ENCODE measurements at regions of chr10 and their contacts with region 1.

Region 1: DNA sequence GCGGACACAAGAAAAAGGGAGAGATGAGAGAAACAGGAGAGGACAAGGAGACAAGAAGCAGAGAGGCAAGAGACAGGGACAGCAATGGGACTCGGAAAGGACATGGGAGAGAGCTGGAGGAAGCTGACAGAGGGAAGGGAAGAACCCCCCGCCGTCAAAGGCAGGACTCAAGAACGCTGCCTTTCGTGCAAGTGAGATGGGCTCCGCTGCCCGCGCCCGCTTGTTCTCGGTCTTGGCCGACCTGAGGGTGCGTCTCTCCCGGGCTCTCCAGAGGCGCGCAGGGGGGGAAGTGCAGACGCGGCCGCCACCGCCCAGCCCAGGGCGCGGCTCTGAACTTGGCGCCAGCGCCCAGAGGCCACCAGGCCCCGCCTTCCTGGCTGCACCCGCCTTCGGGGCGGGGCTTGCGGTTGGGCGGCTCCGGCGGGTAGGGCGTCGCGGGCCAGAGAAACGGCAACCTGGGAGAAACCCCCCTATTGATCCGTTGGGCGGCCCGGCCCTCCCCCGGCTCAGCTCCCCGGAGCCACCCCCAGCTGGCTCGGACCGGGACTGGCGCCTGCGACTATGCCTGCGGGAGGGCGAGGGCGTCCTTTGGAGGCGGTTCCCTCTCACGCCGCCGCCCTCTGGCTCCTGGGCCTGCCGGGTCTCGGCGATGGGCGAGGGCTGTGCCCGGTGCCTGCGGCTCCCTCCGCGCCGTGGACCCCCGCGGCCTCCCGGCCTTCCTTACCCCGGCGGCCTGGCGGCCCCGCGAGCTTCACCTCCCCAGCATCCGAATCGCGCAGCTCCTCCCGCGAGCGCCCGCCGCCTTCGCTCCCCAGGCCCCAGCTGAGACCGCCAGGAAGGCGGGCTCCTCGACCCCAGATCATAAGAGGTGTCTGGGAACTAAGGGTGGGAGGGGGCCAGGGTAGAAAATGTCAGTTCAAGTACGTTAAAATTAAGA is 2.2 kb upstream of the ANTXRL start:
- DNase-seq: peak; percentile 34
- ATAC-seq: peak; percentile 87
- H3K4me3 ChIP-seq: peak overlapping the region; percentile 65
- H3K27ac ChIP-seq: peak overlapping the region; percentile 57; the same call in 1 of the 2 replicates
- H3K4me1 ChIP-seq: peaks cover 2% of the 10 kb centered on the region; the same call in 1 of the 2 replicates
- H3K27me3 ChIP-seq: peaks cover 6% of the 10 kb centered on the region
- CTCF ChIP-seq: no peak
- POLR2A ChIP-seq: no peak
- RAD21 ChIP-seq: no peak

Region 2: DNA sequence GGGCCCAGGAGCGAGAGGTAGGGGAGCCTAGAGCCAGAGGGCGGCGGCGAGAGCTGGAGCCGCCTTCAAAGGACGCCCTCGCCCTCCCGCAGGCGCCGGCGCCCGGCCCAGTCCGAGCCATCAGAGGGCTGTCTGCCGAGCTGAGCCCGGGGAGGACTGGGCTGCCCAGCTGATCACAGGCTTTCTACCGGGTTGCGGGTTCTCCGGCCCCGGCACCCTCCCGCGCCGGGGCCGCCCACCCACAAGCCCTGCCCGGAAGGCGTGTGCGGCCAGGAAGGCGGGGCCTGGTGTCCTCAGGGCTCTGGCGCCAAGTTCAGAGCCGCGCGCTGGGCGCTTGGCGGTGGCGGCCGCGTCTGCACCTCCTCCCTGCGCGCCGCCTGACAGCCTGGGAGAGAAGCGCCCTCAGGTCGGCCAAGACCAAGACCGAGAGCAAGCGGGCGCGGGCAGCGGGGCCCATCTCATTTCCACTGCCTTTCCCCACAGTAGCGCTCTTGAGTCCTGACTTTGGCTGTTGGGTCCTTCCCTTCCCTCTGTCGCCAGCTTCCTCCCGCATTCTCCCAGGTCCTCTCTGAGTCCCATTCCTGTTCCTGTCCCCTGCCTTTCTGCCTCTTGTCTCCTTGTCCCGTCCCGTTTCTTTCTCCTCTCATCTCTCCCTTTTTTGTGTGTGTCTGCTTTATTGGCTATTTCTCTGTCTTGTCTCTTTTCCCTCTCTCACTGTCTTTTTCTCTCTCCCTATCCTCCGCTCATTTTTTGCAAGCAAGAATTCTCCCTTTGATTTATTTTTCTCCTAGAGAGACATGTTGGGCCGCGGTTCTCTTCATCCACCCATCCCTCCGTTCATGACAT is 177.9 kb before region 1 on chr10:
- CTCF ChIA-PET with region 1: interaction called, 3 read pairs
- POLR2A ChIA-PET with region 1: no interaction called
- dilution Hi-C with region 1: no loop called
- in situ Hi-C with region 1: loop called (anchors 5 kb)
- intact Hi-C with region 1: no loop called
- DNase-seq: peak; percentile 12
- ATAC-seq: peak; percentile 97
- H3K4me3 ChIP-seq: peak overlapping the region; percentile 51
- H3K27ac ChIP-seq: no peak overlapping the region; the same call in 1 of the 2 replicates
- H3K4me1 ChIP-seq: peaks cover 3% of the 10 kb centered on the region; the same call in 1 of the 2 replicates
- H3K27me3 ChIP-seq: peaks cover 20% of the 10 kb centered on the region
- CTCF ChIP-seq: no peak
- POLR2A ChIP-seq: no peak
- RAD21 ChIP-seq: no peak

Region 3: GRCh38 chr10:46325023-46325422 is 40.5 kb after region 1 on chr10:
- CTCF ChIA-PET with region 1: no interaction called
- POLR2A ChIA-PET with region 1: no interaction called
- dilution Hi-C with region 1: no loop called
- in situ Hi-C with region 1: no loop called
- intact Hi-C with region 1: no loop called
- DNase-seq: peak; percentile 14
- ATAC-seq: peak; percentile 79
- H3K4me3 ChIP-seq: no peak overlapping the region
- H3K27ac ChIP-seq: no peak overlapping the region
- H3K4me1 ChIP-seq: peaks cover 5% of the 10 kb centered on the region; the same call in 1 of the 2 replicates
- H3K27me3 ChIP-seq: peaks cover 3% of the 10 kb centered on the region; the same call in 1 of the 2 replicates
- CTCF ChIP-seq: peak; percentile 45
- POLR2A ChIP-seq: no peak
- RAD21 ChIP-seq: peak; percentile 43

Region 4: GRCh38 chr10:47384148-47384921 is 1099.8 kb after region 1 on chr10 and contains the start of gene ZNF488:
- CTCF ChIA-PET with region 1: interaction called, 3 read pairs
- POLR2A ChIA-PET with region 1: no interaction called
- dilution Hi-C with region 1: no loop called
- in situ Hi-C with region 1: loop called (anchors 5 kb)
- intact Hi-C with region 1: no loop called
- DNase-seq: peak; percentile 49
- ATAC-seq: peak; percentile 99
- H3K4me3 ChIP-seq: peak within 1 kb of the TSS; percentile 76
- H3K27ac ChIP-seq: peak within 1 kb of the TSS; percentile 65
- H3K4me1 ChIP-seq: peaks cover 2% of the 10 kb centered on the region; the same call in 1 of the 2 replicates
- H3K27me3 ChIP-seq: peaks cover 36% of the 10 kb centered on the region
- CTCF ChIP-seq: no peak
- POLR2A ChIP-seq: no peak
- RAD21 ChIP-seq: no peak
- total RNA-seq, gene ZNF488: under 0.01 TPM in 2 replicates

Measured in IMR-90 (cell line).